ENCODE measurements at regions of chr2 and their contacts with region 1.

Region 1: GRCh38 chr2:25606892-25607291 is 66.5 kb downstream of the DTNB start:
- DNase-seq: peak in 2 of 5 donors; percentile 11 to 24
- H3K4me3 ChIP-seq: no peak overlapping the region
- H3K4me3 Mint-ChIP-seq: no peak overlapping the region
- H3K27ac ChIP-seq: no peak overlapping the region
- H3K27ac Mint-ChIP-seq: no peak overlapping the region
- H3K4me1 ChIP-seq: no peaks in the 10 kb centered on the region
- H3K4me1 Mint-ChIP-seq: peaks cover 0 to 1% (median 0%) of the 10 kb centered on the region in 3 donors
- H3K27me3 ChIP-seq: no peaks in the 10 kb centered on the region
- H3K27me3 Mint-ChIP-seq: no peaks in the 10 kb centered on the region

Region 2: DNA sequence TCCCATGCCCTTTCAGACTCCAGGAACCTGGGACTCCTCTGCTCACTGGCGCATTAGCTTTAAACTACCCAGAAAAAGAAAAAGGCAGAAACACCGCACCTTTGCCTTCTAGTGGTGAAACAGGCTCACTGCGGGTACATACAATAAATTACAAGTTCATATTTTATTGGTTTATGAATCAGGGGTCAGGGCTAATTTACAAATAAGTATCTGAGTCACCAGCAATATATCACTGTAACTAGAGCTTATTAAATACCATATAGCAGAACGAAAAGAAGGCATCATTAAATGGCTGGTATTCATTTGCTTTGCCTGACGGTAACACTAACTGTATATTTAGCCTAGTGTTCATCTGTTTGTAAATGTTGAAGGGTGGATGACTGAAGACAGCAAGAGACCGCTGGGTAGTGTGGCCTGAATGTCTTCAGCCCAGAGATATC is 93.3 kb after region 1 on chr2:
- CTCF ChIA-PET with region 1: interaction called, 55 read pairs
- POLR2A ChIA-PET with region 1: no interaction called
- DNase-seq: peak in 2 of 5 donors; percentile 13 to 15
- H3K4me3 ChIP-seq: no peak overlapping the region
- H3K4me3 Mint-ChIP-seq: no peak overlapping the region
- H3K27ac ChIP-seq: no peak overlapping the region
- H3K27ac Mint-ChIP-seq: peak overlapping the region in 2 of 8 donors; percentile 17 to 61
- H3K4me1 ChIP-seq: no peaks in the 10 kb centered on the region
- H3K4me1 Mint-ChIP-seq: peaks cover 0 to 4% (median 3%) of the 10 kb centered on the region in 3 donors
- H3K27me3 ChIP-seq: no peaks in the 10 kb centered on the region
- H3K27me3 Mint-ChIP-seq: no peaks in the 10 kb centered on the region

Region 3: GRCh38 chr2:25787013-25787412 is 180.1 kb after region 1 on chr2:
- CTCF ChIA-PET with region 1: no interaction called
- POLR2A ChIA-PET with region 1: no interaction called
- DNase-seq: no peak
- H3K4me3 ChIP-seq: no peak overlapping the region
- H3K4me3 Mint-ChIP-seq: no peak overlapping the region
- H3K27ac ChIP-seq: no peak overlapping the region
- H3K27ac Mint-ChIP-seq: no peak overlapping the region
- H3K4me1 ChIP-seq: peaks cover 14% of the 10 kb centered on the region
- H3K4me1 Mint-ChIP-seq: peaks cover 40 to 56% (median 52%) of the 10 kb centered on the region in 3 donors
- H3K27me3 ChIP-seq: no peaks in the 10 kb centered on the region
- H3K27me3 Mint-ChIP-seq: no peaks in the 10 kb centered on the region

Region 4: GRCh38 chr2:25844089-25844488 is 237.2 kb after region 1 on chr2:
- CTCF ChIA-PET with region 1: no interaction called
- POLR2A ChIA-PET with region 1: no interaction called
- DNase-seq: no peak
- H3K4me3 ChIP-seq: no peak overlapping the region
- H3K4me3 Mint-ChIP-seq: no peak overlapping the region
- H3K27ac ChIP-seq: no peak overlapping the region
- H3K27ac Mint-ChIP-seq: no peak overlapping the region
- H3K4me1 ChIP-seq: no peaks in the 10 kb centered on the region
- H3K4me1 Mint-ChIP-seq: peaks cover 9 to 27% (median 10%) of the 10 kb centered on the region in 3 donors
- H3K27me3 ChIP-seq: no peaks in the 10 kb centered on the region
- H3K27me3 Mint-ChIP-seq: no peaks in the 10 kb centered on the region

Region 5: DNA sequence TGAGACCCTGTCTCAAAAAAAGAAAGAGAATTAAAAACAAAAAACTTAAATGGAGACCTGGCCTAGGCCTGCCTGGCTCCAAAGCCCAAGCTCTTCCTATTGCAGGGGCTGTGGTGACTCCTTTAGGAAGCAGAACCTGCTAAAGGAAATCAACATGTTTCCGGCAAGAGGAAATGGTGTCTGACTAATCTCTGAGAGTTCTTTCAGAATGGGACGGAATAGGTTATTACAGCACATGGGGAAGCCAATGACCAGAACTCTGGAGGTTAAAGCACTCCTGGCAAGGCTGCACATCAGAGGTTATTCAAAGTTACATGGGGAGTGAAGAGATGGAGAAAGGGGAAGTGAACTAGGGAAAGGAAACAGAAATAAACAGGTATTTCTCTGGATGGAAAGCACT is 354.0 kb after region 1 on chr2:
- CTCF ChIA-PET with region 1: no interaction called
- POLR2A ChIA-PET with region 1: no interaction called
- DNase-seq: no peak
- H3K4me3 ChIP-seq: no peak overlapping the region
- H3K4me3 Mint-ChIP-seq: no peak overlapping the region
- H3K27ac ChIP-seq: no peak overlapping the region
- H3K27ac Mint-ChIP-seq: peak overlapping the region in 2 of 8 donors; percentile 29 to 75
- H3K4me1 ChIP-seq: no peaks in the 10 kb centered on the region
- H3K4me1 Mint-ChIP-seq: peaks cover 8 to 15% (median 13%) of the 10 kb centered on the region in 3 donors
- H3K27me3 ChIP-seq: no peaks in the 10 kb centered on the region
- H3K27me3 Mint-ChIP-seq: no peaks in the 10 kb centered on the region